GM18951 (cell line): ENCODE measurements at regions of chr18 and their contacts with region 1.

Region 1: GRCh38 chr18:26648509-26649192 is 100.3 kb upstream of the KCTD1 start:
- POLR2A ChIP-seq: no peak

Region 2: DNA sequence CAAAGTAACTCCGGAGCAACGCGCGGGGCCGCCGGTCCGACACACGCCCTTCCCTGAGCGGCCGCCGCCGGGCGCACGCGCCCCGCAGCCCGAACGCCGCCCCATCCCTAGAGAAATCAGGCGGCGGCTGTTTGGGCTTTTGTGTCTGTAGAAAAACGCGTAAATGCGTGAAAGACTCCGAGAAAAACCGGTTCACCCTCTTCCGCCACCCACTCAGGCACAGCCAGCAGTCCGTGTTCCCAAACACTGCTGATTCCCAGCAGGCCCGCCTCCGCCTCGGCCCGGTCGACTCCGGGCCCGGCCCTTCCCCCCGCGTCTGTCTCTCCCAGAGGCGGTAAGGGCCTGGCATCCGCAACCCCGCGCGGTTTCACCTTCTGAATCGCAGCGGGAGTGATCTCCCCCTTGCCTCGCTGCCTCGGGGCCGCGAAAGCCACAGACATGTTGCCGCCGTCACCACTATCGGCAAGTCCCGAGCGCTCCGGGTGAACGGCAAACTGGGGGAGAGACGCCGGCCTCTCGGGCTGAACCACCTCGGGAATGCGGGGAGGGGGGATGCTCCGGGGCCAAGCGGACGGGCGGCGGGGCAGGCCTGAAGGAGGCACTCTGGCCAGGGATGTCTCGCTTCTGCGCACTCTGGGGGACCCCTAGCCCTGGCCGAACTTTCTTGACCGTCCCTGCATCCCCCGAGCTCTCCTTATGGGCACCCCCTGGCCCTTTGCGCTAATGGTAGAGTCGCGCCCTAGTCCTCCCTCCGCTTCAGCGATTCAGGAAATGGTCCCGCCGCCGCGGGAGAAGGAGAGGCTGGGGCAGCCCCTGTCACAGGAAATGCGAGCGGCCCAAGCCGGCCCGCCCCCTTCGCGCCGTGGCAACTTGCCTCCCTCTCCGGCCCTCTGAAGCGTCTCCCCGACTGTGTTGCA is 558.3 kb before region 1 on chr18 and contains the start of gene SS18:
- in situ Hi-C with region 1: no loop called
- POLR2A ChIP-seq: peak; percentile 91

Region 3: GRCh38 chr18:26342648-26343047 is 306.0 kb before region 1 on chr18:
- in situ Hi-C with region 1: no loop called
- POLR2A ChIP-seq: no peak

Region 4: DNA sequence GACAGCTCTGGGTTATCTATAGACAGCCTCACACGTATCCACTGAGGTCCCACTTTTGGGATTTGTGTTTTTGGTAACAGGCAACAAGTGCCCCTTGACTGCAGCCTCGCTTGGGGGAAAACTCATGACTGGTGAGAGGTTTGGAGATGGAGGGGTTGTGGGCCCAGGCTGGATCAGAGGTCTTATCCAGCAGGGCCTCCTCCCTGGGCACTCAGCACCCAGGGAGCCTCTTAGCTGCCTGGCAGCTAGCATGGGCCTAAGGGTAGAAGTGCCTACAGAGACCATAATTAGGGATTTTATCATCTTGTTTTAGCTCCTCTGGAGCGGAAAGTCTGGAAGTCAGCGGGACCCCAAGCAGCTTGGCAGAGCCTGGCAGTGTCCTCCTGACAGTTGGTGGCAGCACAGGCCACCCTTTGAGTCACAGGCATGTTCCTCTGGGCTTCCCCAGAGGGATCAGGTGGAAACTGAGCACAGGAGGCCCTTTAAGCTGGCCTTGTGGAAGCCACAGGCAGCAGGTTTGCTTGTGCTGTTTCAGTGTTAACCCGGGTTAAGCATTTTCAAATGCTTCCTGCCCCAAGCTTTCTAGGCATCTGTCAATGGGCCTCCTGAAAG is 243.4 kb before region 1 on chr18:
- in situ Hi-C with region 1: loop called (anchors 5 kb)
- POLR2A ChIP-seq: no peak